Activated T-helper 2 cell treated with anti-CD3 and anti-CD28 coated beads, Interferon-gamma antibody, Interleukin-2, Interleukin-4, amounts not matched to agents 10 μg/mL and 5 μg/mL and 100 μg/mL, durations not matched to agents 14 hours and 24 hours and 36 hours (primary cell): ENCODE measurements at regions of chr19 and their contacts with region 1.

Region 1: DNA sequence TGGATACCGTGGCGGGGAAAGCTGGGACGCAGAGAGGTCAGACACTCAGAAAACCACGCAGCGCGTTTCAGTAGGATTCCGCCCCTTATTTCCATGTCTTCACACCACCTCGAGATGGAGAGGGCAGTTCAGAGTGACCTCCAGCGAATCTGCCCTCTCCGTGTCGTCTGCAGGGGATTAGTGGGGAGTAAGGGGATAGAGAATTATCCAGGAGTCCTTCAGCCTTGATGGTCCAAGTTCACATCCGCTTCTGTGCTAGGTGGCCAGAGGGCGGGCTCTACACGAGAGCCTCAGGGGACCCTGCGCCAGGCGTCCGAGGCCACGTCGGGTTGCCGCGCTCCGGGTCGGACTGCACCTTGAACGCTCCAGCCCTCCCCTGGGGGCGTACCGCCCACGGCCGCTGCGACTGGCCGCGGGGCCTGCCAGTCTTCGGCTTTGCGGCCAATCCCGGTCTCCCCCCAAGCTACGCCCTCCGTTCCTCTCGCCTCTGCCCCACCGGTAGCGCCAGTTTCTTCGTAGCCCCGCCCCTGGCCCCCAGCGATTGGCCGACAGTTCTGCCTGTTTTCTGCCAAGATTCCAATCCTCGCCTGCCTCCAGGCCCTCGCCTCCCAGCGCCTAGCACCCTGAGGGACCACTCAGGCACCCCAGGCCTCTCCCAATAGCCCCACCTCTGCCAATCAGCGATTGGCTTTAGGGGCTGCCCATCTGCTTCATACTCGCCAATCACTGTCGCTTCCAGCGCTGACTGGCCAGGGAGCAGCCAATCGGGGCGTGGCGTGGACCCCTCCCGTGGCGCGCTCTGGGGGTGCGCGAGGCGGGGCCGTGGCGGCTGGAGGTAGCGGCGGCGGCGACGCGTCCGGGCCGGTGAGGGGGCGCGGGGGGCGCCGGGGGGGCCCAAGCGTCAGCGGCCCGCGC is at the start of gene SLC25A42:
- DNase-seq: peak; percentile 99
- H3K4me3 Mint-ChIP-seq: peak within 1 kb of the TSS; percentile 88
- H3K27ac Mint-ChIP-seq: peak within 1 kb of the TSS; percentile 80
- H3K4me1 Mint-ChIP-seq: peaks cover 25% of the 10 kb centered on the region
- H3K27me3 Mint-ChIP-seq: no peaks in the 10 kb centered on the region
- total RNA-seq, gene SLC25A42: 9.1 and 9.2 TPM in 2 replicates

Region 2: DNA sequence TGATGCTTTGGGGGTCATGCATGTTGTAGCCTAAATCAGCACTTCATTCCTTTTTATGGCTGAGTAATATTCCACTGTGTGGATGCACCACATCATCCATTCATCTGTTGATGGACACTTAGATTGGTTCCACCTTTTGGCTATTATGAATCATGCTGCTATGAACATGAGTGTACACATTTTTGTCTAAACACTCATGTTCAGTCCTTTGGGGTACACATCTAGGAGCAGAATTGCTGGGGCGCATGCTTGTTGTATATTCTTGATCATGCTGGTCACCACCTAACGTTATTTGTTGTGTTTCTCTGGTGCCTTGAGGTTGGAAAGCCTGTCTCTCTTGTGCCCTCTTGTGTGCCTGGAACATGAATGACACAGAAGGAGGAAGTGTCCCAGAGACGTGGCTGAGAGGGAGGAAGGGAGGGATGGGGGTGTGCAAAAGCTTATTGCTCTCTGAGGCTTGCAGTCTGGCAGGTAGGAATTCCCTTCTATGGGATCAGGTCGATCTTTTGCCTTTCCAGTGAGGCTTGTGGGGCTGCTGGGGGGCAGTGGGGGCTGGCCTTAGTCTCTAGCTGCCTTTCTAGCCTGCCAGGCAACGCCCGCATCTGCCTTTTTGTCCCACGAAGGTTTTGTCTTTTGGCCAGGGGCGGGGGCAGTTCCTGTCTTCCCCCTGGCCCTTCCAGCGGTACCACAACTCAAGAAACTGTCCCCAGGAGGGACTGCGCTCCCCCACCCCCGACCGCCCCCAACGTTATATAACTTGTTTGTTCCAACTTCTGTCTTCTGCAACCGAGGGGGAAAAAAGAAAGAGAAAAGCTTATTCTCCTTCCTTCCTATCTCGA is 419.0 kb before region 1 on chr19:
- intact Hi-C with region 1: no loop called
- DNase-seq: no peak
- H3K4me3 Mint-ChIP-seq: no peak overlapping the region
- H3K27ac Mint-ChIP-seq: no peak overlapping the region
- H3K4me1 Mint-ChIP-seq: peaks cover 6% of the 10 kb centered on the region
- H3K27me3 Mint-ChIP-seq: no peaks in the 10 kb centered on the region

Region 3: DNA sequence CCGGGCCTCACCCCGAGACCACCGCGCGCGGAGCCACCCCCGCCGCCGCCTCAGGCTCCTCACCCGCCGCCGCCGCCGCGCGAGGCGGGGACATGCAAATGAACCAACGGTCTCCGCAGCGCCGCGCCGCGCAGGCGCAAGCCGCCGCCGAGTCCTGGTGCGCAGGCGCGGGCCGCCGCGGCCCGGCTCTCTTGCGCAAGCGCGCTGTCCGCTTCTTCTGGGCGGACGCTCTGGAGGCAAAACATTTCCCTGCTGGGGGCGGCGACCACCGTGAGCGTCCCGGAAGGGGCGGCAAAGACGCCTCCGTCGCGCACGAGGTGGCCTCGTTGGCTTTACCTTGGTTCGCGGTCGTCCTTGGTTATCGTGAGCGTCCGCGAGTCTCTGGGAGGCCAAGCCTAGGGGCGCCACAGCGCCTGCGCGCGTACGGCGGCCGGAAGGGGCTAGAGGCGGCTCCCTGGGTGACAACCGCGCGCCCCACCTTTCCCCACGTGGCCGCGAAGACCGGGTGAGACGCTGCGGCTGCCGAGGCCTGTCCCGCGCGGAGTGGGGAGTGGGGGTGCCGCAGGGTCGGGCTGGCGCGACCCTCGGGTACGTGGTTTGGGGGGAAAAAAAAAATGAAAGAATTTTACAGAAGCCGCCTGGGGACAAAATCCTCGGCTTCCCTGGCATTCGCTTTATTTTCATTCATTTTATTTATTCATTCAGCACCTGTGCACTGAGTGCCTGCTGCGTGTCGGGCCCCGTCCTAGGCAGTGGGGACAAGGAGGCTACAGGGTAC is 29.8 kb before region 1 on chr19 and contains the starts of genes ARMC6 and SUGP2:
- intact Hi-C with region 1: loop called (anchors 2 kb)
- DNase-seq: peak; percentile 89
- H3K4me3 Mint-ChIP-seq: peak within 1 kb of the TSS; percentile 90
- H3K27ac Mint-ChIP-seq: peak within 1 kb of the TSS; percentile 92
- H3K4me1 Mint-ChIP-seq: peaks cover 26% of the 10 kb centered on the region
- H3K27me3 Mint-ChIP-seq: no peaks in the 10 kb centered on the region
- total RNA-seq, gene ARMC6: 44.9 and 53.9 TPM in 2 replicates
- total RNA-seq, gene SUGP2: 129 and 140 TPM in 2 replicates

Region 4: DNA sequence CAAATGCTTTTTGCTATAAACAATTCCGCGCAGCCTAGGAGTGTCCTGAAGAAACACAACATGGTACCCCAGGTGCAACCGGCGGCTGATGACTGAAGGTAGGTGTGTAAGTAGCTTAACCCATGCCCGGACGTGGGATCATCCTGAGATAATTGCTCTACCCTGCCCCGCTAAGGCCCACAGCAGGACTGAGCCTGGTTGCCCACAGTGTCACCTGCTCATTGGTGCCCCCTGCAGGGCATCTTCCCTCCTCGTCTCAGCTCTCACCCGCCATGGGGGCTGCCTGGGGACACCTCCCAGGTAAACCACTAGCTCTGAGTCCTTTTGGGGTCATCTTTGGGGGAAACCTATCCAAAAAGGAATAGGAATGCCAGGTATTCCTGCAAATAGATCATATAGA is 52.5 kb after region 1 on chr19:
- intact Hi-C with region 1: no loop called
- DNase-seq: peak; percentile 27
- H3K4me3 Mint-ChIP-seq: no peak overlapping the region
- H3K27ac Mint-ChIP-seq: no peak overlapping the region
- H3K4me1 Mint-ChIP-seq: peaks cover 5% of the 10 kb centered on the region
- H3K27me3 Mint-ChIP-seq: no peaks in the 10 kb centered on the region

Region 5: GRCh38 chr19:19203012-19203856 is 139.8 kb after region 1 on chr19 and contains the start of gene NR2C2AP:
- intact Hi-C with region 1: no loop called
- DNase-seq: peak; percentile 90
- H3K4me3 Mint-ChIP-seq: peak within 1 kb of the TSS; percentile 92
- H3K27ac Mint-ChIP-seq: peak within 1 kb of the TSS; percentile 85
- H3K4me1 Mint-ChIP-seq: peaks cover 28% of the 10 kb centered on the region
- H3K27me3 Mint-ChIP-seq: no peaks in the 10 kb centered on the region
- total RNA-seq, gene NR2C2AP: 32.5 and 37.0 TPM in 2 replicates